Ascending aorta (tissue), 2 donors: ENCODE measurements at regions of chr6 and their contacts with region 1.

Region 1: DNA sequence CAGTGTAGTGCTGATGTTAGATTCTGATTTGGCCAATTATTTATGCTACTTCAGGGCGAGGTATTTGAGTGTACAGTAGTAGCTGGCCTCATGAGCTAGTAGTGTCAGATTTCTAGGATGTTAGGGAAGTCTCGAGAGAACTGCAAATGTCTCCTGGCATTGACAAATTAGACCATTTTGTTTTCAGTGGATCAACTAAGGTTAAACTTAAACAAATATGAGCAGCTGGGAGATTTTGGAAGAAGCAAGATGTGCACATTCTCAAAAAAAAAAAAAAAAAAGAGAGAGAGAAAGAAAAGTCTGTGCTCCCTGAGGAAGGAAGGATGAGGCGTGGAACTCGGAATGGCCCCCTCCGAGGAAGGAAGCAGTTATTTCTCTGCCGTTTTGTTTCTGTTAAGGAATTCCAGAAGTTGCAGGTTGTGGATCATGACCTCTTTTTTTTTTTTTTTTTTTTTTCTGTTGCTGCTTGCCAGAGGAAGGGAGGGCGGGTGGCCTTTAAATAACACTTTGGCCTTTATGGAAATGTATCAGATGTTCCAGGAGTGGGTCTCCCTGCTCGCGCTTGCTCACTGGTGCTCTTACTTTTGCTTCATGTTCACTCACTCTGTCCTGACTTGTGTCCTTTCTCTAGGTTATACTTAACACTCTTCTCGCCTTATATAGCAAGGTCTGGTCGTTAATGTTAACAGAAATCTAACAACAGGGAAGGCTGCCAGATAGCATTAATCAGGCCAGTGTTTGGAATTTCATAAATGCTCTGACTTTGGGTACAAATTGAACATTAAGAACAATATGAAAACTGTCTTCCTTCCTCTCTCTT is 124.4 kb downstream of the TCP11 start:
- DNase-seq: peak in 1 of 2 donors; percentile 81
- H3K4me3 ChIP-seq: peak overlapping the region; percentile 73
- H3K27ac ChIP-seq: peak overlapping the region; percentile 91 to 97
- H3K4me1 ChIP-seq: peaks cover 5 to 32% of the 10 kb centered on the region in 2 donors
- H3K27me3 ChIP-seq: no peaks in the 10 kb centered on the region
- CTCF ChIP-seq: no peak

Region 2: DNA sequence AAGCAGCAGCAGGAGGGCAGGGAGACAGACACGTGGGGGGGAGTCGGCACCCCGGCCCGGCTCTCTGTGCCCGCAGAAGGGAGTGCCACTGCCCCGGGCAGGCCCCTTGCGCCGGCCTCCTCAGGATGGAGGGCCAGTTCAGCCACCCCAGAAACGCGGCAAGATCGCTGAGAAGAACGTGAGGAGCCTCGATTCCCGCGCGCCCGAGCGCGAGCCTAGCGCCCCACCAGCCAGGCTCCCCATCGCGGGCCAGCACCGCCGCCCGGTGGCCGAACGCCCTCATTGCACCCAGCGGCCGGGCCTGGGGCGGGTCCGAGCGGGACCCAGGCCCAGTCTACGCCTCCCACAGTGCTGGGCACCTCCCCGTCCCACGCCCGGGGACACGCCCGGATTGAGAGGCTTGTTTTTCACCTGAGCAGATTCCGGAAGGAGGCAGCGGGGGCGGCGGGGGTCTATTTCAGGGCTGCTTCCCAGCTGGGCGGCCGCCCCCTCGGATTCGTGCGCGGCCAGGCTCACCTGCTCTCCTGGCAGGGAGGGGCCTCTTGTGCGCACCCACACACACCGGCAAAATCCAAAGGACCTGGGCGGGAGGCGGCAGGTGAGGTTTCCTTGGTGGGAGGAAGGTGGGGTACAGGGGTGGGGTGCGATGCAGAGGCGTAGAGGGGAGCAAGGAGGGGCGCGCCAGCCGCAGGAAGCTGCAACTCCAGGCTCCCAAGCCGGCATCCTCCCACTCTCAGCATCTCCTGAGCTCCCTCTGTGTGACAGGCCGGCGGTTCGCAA is 861.9 kb before region 1 on chr6:
- intact Hi-C with region 1: no loop called
- DNase-seq: peak in 1 of 2 donors; percentile 65
- H3K4me3 ChIP-seq: peak overlapping the region in 1 of 2 donors; percentile 24
- H3K27ac ChIP-seq: no peak overlapping the region
- H3K4me1 ChIP-seq: peaks cover 0 to 2% of the 10 kb centered on the region in 2 donors
- H3K27me3 ChIP-seq: peaks cover 14% of the 10 kb centered on the region
- CTCF ChIP-seq: peak; percentile 88 to 99 (median 93)

Region 3: DNA sequence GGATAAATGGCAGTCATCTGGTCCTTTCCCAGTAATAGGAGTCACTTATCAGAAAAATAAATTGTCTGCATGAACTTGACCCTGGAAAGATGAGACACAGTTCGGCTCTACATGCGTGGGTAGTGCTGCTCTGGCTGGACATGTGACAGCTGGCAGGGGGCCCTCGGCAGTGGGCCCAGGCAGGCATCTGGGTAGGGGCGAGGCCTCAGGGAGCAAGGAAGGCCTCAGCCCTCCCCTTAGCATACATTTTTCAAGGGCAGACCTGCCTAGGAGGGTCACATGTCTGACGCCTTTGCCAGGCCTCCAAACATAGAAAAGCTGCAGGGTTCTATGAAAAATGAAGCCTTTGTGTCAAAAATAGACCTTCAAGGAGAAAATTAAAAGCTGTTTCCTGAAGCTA is 307.3 kb before region 1 on chr6:
- intact Hi-C with region 1: no loop called
- DNase-seq: peak in 1 of 2 donors; percentile 74
- H3K4me3 ChIP-seq: no peak overlapping the region
- H3K27ac ChIP-seq: peak overlapping the region; percentile 39 to 44
- H3K4me1 ChIP-seq: peaks cover 0 to 9% of the 10 kb centered on the region in 2 donors
- H3K27me3 ChIP-seq: no peaks in the 10 kb centered on the region
- CTCF ChIP-seq: no peak

Region 4: DNA sequence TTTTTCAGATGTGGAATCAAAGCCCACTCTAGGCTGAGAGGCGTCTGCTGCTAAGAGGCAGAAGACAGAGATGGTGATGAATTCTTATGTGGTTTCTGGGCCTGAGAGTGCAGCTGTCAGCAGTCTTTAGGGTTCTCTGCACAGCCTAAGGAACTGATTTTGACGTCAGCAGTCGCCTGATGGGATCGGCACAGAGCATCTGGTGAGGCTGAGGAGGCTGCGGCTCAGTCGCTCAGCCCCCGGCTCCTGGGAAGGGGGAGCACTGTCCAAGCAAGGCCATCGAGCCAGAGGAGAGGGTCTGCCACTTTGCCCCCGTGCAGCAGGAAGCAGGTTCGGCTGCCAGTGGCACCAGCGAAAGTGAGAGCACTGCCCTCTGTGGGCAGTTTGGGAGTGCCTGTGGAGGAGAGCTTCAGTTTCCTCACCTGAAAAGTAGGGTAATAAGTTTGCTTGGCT is 31.9 kb after region 1 on chr6:
- intact Hi-C with region 1: loop called (anchors 1 kb)
- DNase-seq: peak in 1 of 2 donors; percentile 40
- H3K4me3 ChIP-seq: peak overlapping the region; percentile 23 to 31
- H3K27ac ChIP-seq: peak overlapping the region; percentile 87 to 89
- H3K4me1 ChIP-seq: peaks cover 59 to 93% of the 10 kb centered on the region in 2 donors
- H3K27me3 ChIP-seq: no peaks in the 10 kb centered on the region
- CTCF ChIP-seq: peak in 2 of 3 experiments; percentile 30 to 56

Region 5: DNA sequence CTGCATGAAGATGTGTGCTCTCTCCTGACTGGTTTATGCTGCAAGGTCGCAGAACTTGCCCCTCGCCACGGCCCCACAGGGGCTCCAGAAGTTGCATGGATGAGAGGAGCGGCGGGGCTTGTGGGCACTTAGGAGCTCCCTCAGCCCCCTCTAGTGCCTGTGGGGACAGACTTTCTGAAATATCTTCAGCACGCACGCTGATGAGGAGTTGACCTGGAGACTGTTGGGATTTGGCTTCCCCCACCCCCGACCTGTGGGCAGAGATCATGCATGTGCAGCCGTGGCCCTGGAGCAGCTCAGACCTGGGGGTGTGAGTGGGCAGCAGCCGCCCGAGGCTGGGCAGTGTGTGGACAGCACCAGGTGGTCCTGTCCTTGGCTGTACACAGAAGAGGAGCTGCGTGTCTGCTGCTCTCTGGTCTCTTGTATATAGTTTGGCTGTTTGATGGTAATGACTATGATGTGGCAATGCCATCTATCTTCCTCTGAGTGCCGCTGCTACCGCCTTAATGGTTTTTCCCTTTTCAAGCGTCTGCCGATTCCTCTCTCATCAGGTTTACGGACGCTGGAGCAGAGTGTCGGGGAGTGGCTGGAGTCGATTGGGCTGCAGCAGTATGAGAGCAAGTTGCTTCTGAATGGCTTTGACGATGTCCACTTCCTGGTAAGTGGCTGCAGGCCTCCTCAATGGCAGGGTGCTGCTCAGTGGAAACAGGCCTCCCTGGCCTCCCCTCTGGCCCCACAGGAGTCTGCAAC is 43.1 kb after region 1 on chr6:
- intact Hi-C with region 1: loop called (anchors 2 kb)
- DNase-seq: no peak
- H3K4me3 ChIP-seq: peak overlapping the region in 1 of 2 donors; percentile 52
- H3K27ac ChIP-seq: peak overlapping the region; percentile 18 to 76
- H3K4me1 ChIP-seq: peaks cover 14 to 38% of the 10 kb centered on the region in 2 donors
- H3K27me3 ChIP-seq: no peaks in the 10 kb centered on the region
- CTCF ChIP-seq: peak in 1 of 3 experiments; percentile 17

Region 6: GRCh38 chr6:35089935-35090505 is 73.3 kb after region 1 on chr6:
- intact Hi-C with region 1: loop called (anchors 2 kb)
- DNase-seq: peak in 1 of 2 donors; percentile 78
- H3K4me3 ChIP-seq: no peak overlapping the region
- H3K27ac ChIP-seq: peak overlapping the region; percentile 74 to 78
- H3K4me1 ChIP-seq: peaks cover 29 to 63% of the 10 kb centered on the region in 2 donors
- H3K27me3 ChIP-seq: no peaks in the 10 kb centered on the region
- CTCF ChIP-seq: no peak

Region 7: DNA sequence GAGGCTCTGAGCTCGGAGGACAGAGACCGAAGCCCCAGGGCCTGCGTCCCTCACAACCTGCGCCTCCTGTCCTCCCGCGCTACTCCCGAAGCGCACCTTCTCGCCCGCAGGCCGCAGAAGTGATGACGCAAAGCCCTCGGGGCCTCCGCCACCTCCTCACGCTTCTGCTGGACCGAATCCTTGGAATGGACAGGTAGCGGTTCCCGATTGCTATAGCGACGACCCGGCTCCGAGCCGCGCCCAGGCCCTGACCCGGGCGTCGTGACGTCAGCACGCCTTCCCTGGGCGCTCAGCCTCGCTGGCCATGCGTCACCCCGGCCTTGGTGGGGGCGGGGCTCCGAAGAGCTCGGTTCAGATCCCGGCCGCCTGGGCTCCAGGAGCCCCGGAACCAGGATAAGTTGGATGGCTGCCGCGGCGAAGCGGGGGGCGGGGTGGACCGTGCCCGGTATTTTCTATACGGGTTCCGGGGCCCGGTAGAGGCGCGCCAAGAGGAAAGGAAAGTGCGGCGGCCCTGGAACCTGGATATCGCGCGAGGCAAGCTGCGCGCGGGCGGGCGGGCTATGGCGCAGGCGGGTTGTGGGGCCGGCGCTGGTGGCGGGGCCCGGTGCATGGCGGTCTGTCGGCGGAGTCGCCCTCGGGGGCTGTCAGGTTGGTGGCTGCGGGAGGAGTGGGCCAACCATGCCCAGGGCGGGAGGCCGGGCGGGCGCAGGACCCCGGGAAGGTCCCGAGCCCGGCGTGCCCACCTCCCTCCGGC is 242.7 kb after region 1 on chr6 and contains the start of gene ZNF76:
- intact Hi-C with region 1: loop called (anchors 5 kb)
- DNase-seq: peak; percentile 90 to 99
- H3K4me3 ChIP-seq: peak within 1 kb of the TSS; percentile 77 to 89
- H3K27ac ChIP-seq: peak within 1 kb of the TSS; percentile 97 to 98
- H3K4me1 ChIP-seq: peaks cover 0 to 8% of the 10 kb centered on the region in 2 donors
- H3K27me3 ChIP-seq: no peaks in the 10 kb centered on the region
- CTCF ChIP-seq: peak in 1 of 3 experiments; percentile 87
- total RNA-seq, gene ZNF76: 55.7 TPM